Endothelial cell of umbilical vein (primary cell): ENCODE measurements at regions of chr21 and their contacts with region 1.

Region 1: GRCh38 chr21:43866260-43866629 is 1.2 kb downstream of the AGPAT3 start:
- DNase-seq: no peak
- H3K4me3 ChIP-seq: peak overlapping the region; percentile 88 to 94 (median 92)
- H3K27ac ChIP-seq: peak overlapping the region; percentile 41
- H3K4me1 ChIP-seq: peaks cover 15% of the 10 kb centered on the region
- H3K27me3 ChIP-seq: no peaks in the 10 kb centered on the region
- CTCF ChIP-seq: no peak
- POLR2A ChIP-seq: no peak

Region 2: DNA sequence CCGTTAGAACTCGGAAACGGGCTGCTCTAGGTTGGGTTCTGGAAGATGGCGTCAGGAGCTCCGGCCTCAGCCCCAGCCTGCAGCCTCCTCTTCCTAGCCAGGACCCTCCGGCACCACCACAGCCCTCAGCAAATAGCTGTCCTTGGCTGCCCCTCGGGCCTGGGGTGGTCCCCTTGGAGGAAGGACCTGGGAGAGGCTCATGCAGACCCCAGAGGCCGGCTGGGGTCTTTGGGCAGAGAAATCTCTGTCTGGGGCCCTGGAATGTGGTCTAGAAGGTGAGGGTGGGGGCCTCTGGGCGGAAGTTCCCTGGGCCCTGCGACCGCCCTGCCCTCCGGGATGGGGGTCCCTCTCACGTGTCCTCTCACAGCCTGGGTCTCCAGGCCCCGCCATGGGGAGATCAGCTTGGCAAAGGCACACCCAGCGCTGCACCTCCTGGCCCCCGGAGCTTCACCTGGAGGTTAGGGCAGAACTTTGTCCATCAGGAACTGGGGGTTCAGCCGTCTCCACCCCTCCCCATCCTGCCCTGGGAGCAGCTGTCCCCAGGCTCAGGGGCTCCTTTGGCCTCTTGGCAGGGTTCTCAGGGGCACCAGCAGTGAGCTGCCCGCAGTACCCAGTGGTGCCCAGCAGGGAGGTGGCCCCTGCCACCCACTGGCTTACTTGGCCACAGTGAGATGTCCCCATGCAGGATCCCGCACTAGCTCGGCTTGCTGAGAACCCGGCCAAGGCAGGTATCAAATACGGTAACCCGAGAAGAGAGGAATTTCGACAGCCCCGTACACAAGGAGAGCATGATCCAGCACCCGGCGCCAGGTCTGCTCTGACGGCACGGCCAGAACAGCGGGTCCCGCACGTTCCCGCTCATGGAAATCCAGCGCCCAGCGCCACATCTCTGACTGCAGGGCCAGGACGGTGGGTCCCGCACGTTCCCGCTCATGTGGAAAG is 40.3 kb before region 1 on chr21:
- CTCF ChIA-PET with region 1: no interaction called
- POLR2A ChIA-PET with region 1: no interaction called
- dilution Hi-C with region 1: no loop called
- intact Hi-C with region 1: loop called (anchors 5 kb)
- DNase-seq: no peak
- H3K4me3 ChIP-seq: no peak overlapping the region
- H3K27ac ChIP-seq: no peak overlapping the region
- H3K4me1 ChIP-seq: no peaks in the 10 kb centered on the region
- H3K27me3 ChIP-seq: peaks cover 0 to 3% of the 10 kb centered on the region in 2 experiments
- CTCF ChIP-seq: peak; percentile 16 to 22
- POLR2A ChIP-seq: no peak

Region 3: DNA sequence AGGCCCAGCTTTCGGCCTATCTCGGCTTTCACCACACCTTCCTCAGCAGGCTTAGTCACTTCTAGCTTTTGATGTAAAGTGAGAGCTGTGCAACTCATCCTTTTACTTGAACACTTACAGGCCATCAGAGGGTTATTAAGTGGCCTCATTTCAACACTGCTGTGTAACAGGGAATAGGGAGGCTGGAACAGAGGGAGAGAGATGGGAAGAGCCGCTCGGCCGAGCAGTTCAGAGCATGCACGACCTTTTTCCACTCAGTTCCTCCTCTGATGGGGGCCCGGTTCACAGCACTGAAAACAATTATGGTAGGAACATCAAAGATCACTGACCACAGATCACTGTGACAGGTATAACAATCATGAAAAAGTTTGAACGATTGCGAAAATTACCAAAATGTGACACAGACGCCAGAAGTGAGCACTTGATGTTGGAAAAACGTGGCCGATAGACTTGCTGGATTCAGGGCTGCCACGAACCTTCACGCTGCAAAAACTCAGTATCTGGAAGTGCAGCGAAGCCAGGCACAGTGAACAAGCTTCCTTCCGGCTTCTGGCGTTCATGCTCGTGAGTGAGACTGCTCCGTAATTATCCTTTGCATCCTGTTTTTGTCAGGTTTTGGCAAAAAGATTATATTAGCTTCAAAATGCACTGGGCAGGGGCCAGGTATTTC is 27.4 kb after region 1 on chr21:
- CTCF ChIA-PET with region 1: interaction called, 4 read pairs
- POLR2A ChIA-PET with region 1: interaction called, 3 read pairs
- dilution Hi-C with region 1: no loop called
- intact Hi-C with region 1: loop called (anchors 1 kb)
- DNase-seq: peak; percentile 88
- H3K4me3 ChIP-seq: peak overlapping the region in 2 of 3 experiments; percentile 33 to 58
- H3K27ac ChIP-seq: peak overlapping the region; percentile 82
- H3K4me1 ChIP-seq: peaks cover 24% of the 10 kb centered on the region
- H3K27me3 ChIP-seq: no peaks in the 10 kb centered on the region
- CTCF ChIP-seq: no peak
- POLR2A ChIP-seq: peak; percentile 65

Region 4: GRCh38 chr21:43938751-43939442 is 72.7 kb after region 1 on chr21:
- CTCF ChIA-PET with region 1: interaction called, 8 read pairs
- POLR2A ChIA-PET with region 1: no interaction called
- dilution Hi-C with region 1: no loop called
- intact Hi-C with region 1: loop called (anchors 2 kb)
- DNase-seq: peak; percentile 68
- H3K4me3 ChIP-seq: peak overlapping the region; percentile 20 to 59 (median 27)
- H3K27ac ChIP-seq: peak overlapping the region; percentile 42
- H3K4me1 ChIP-seq: peaks cover 5% of the 10 kb centered on the region
- H3K27me3 ChIP-seq: no peaks in the 10 kb centered on the region
- CTCF ChIP-seq: peak; percentile 99 to 100
- POLR2A ChIP-seq: no peak